Naive thymus-derived CD4-positive, alpha-beta T cell (primary cell): ENCODE measurements at regions of chr21 and their contacts with region 1.

Region 1: GRCh38 chr21:31604591-31605190 is 54.8 kb upstream of the SOD1 start:
- DNase-seq: peak; percentile 32 to 71 (median 64)
- ATAC-seq: peak; percentile 83
- H3K4me3 ChIP-seq: no peak overlapping the region
- H3K4me3 Mint-ChIP-seq: no peak overlapping the region
- H3K27ac ChIP-seq: no peak overlapping the region
- H3K27ac Mint-ChIP-seq: no peak overlapping the region
- H3K4me1 ChIP-seq: no peaks in the 10 kb centered on the region
- H3K4me1 Mint-ChIP-seq: peaks cover 0 to 6% (median 0%) of the 10 kb centered on the region in 7 donors
- H3K27me3 ChIP-seq: no peaks in the 10 kb centered on the region
- H3K27me3 Mint-ChIP-seq: peaks cover 0 to 5% (median 0%) of the 10 kb centered on the region in 5 donors

Region 2: DNA sequence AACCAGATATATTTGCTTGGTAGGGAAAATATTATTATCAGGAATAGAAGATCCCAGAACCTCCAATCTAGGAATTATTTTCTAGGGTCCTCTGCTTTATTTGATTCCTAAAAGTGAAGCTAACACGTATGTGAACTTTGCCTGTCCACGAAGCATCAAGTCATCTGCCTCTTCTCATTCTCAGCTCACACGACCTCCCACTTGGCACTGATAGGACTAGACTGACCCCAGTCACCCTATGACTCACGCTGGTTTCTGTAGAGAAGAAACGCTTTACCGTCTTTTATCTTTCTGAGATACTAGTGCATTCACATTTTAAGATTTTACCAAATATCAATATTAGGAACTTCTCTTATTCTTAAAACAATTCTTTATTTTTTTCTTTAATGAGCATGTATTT is 1041.6 kb before region 1 on chr21:
- CTCF ChIA-PET with region 1: no interaction called
- POLR2A ChIA-PET with region 1: no interaction called
- intact Hi-C with region 1: no loop called
- DNase-seq: no peak
- ATAC-seq: no peak
- H3K4me3 ChIP-seq: no peak overlapping the region
- H3K4me3 Mint-ChIP-seq: no peak overlapping the region
- H3K27ac ChIP-seq: no peak overlapping the region
- H3K27ac Mint-ChIP-seq: no peak overlapping the region
- H3K4me1 ChIP-seq: no peaks in the 10 kb centered on the region
- H3K4me1 Mint-ChIP-seq: no peaks in the 10 kb centered on the region
- H3K27me3 ChIP-seq: no peaks in the 10 kb centered on the region
- H3K27me3 Mint-ChIP-seq: peaks cover 0 to 5% (median 3%) of the 10 kb centered on the region in 5 donors

Region 3: DNA sequence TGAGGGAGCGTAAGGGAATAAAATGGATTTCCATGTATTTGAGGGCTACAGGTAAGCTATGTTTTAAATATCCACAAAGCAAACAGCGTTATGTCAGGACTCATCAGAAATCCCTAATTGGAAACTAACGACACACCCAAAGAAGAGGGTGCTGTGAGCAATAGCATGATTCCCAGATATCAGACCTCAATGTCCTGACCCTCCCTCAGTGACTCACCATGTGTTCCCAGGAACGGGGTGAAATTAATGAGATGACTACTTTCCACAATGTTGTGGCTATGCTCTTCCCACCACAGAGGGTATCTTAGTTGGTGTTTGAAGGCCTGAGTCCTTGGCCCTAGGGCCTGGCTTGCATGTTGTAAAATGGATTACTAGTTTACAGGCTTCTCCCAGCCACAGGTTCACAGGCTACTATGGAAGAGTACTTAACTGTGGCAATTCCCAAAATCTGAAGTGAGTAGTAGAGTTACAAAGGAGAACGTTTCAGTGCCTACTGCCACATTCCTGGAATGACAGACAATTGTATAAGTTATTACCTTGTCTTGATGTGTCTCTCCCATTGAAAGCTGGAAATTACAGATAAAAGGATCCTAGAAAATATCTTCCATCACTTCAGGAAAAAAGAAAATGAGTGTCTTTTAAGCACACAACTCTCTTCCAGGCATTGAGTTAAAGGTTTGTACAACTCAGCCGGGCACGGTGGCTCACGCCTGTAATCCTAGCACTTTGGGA is 721.7 kb before region 1 on chr21:
- CTCF ChIA-PET with region 1: no interaction called
- POLR2A ChIA-PET with region 1: no interaction called
- intact Hi-C with region 1: no loop called
- DNase-seq: no peak
- ATAC-seq: no peak
- H3K4me3 ChIP-seq: no peak overlapping the region
- H3K4me3 Mint-ChIP-seq: no peak overlapping the region
- H3K27ac ChIP-seq: no peak overlapping the region
- H3K27ac Mint-ChIP-seq: no peak overlapping the region
- H3K4me1 ChIP-seq: no peaks in the 10 kb centered on the region
- H3K4me1 Mint-ChIP-seq: no peaks in the 10 kb centered on the region
- H3K27me3 ChIP-seq: no peaks in the 10 kb centered on the region
- H3K27me3 Mint-ChIP-seq: peaks cover 0 to 16% (median 6%) of the 10 kb centered on the region in 5 donors

Region 4: DNA sequence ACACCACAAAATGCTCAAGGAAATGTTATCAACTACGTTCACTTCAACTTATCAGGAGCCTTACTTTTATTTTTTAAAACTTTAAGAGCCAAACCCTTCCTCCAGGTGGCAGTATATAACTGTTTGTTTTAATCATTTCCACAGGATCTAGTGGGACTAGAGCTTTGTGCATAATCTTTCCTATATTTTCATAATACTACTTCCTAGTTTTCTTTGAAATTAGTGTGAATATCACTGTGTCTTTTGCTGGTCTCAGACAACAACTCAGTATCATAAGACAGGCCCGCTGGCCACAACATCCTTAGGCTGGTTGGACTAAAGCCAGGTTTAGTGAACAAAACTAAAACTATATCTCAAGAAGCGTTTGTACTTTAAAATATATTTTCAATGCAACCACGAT is 406.1 kb before region 1 on chr21:
- CTCF ChIA-PET with region 1: interaction called, 7 read pairs
- POLR2A ChIA-PET with region 1: no interaction called
- intact Hi-C with region 1: loop called (anchors 1 kb)
- DNase-seq: peak in 5 of 9 donors; percentile 51 to 63 (median 58)
- ATAC-seq: peak; percentile 74
- H3K4me3 ChIP-seq: no peak overlapping the region
- H3K4me3 Mint-ChIP-seq: peak overlapping the region in 3 of 10 donors; percentile 11 to 40 (median 13)
- H3K27ac ChIP-seq: no peak overlapping the region
- H3K27ac Mint-ChIP-seq: no peak overlapping the region
- H3K4me1 ChIP-seq: no peaks in the 10 kb centered on the region
- H3K4me1 Mint-ChIP-seq: peaks cover 14 to 42% (median 36%) of the 10 kb centered on the region in 7 donors
- H3K27me3 ChIP-seq: no peaks in the 10 kb centered on the region
- H3K27me3 Mint-ChIP-seq: no peaks in the 10 kb centered on the region

Region 5: DNA sequence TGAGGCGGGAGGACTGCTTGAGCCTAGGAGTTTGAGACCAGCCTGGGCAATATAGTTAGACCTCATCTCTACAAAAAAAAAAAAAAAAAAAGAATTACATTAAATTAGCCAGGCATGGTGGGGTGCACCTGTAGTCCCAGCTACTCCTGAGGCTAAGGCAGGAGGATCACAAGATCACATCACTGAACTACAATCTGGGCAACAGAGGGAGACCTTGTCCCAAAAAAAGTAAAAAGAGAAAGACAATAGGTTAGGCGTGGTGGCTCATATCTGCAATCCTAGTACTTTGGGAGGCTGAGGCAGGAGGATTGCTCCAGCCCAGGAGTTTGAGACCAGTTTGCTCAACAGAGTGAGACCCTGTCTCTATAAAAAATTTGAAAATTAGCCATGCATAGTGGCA is 390.9 kb before region 1 on chr21:
- CTCF ChIA-PET with region 1: no interaction called
- POLR2A ChIA-PET with region 1: no interaction called
- intact Hi-C with region 1: loop called in 1 of 2 experiments (anchors 1 kb)
- DNase-seq: peak in 6 of 9 donors; percentile 12 to 48 (median 26)
- ATAC-seq: no peak
- H3K4me3 ChIP-seq: no peak overlapping the region
- H3K4me3 Mint-ChIP-seq: no peak overlapping the region
- H3K27ac ChIP-seq: no peak overlapping the region
- H3K27ac Mint-ChIP-seq: no peak overlapping the region
- H3K4me1 ChIP-seq: no peaks in the 10 kb centered on the region
- H3K4me1 Mint-ChIP-seq: peaks cover 0 to 9% (median 0%) of the 10 kb centered on the region in 7 donors
- H3K27me3 ChIP-seq: no peaks in the 10 kb centered on the region
- H3K27me3 Mint-ChIP-seq: no peaks in the 10 kb centered on the region

Region 6: DNA sequence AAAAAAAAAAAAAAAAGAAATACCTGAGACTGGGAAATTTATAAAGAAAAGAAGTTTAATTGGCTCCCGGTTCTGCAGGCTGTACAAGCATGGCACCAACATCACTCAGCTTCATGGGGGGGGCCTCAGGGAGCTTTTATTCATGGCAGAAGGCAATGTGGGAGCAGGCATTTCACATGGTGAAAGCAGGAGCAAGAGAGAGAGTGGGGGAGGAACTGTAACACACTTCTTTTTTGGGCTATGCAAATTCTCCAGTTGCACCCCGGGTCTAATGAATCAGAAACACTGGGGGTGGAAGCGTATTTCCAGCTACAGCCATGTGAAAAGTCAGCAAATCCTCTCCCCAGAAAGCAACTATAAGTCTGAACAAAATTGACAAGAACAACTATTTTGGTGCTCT is 43.0 kb after region 1 on chr21:
- CTCF ChIA-PET with region 1: no interaction called
- POLR2A ChIA-PET with region 1: no interaction called
- intact Hi-C with region 1: no loop called
- DNase-seq: no peak
- ATAC-seq: no peak
- H3K4me3 ChIP-seq: no peak overlapping the region
- H3K4me3 Mint-ChIP-seq: no peak overlapping the region
- H3K27ac ChIP-seq: no peak overlapping the region
- H3K27ac Mint-ChIP-seq: no peak overlapping the region
- H3K4me1 ChIP-seq: no peaks in the 10 kb centered on the region
- H3K4me1 Mint-ChIP-seq: no peaks in the 10 kb centered on the region
- H3K27me3 ChIP-seq: no peaks in the 10 kb centered on the region
- H3K27me3 Mint-ChIP-seq: peaks cover 0 to 3% (median 0%) of the 10 kb centered on the region in 5 donors

Region 7: DNA sequence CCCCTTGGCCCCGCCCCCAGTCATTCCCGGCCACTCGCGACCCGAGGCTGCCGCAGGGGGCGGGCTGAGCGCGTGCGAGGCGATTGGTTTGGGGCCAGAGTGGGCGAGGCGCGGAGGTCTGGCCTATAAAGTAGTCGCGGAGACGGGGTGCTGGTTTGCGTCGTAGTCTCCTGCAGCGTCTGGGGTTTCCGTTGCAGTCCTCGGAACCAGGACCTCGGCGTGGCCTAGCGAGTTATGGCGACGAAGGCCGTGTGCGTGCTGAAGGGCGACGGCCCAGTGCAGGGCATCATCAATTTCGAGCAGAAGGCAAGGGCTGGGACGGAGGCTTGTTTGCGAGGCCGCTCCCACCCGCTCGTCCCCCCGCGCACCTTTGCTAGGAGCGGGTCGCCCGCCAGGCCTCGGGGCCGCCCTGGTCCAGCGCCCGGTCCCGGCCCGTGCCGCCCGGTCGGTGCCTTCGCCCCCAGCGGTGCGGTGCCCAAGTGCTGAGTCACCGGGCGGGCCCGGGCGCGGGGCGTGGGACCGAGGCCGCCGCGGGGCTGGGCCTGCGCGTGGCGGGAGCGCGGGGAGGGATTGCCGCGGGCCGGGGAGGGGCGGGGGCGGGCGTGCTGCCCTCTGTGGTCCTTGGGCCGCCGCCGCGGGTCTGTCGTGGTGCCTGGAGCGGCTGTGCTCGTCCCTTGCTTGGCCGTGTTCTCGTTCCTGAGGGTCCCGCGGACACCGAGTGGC is 55.0 kb after region 1 on chr21 and contains the start of gene SOD1:
- CTCF ChIA-PET with region 1: no interaction called
- POLR2A ChIA-PET with region 1: no interaction called
- intact Hi-C with region 1: loop called in 1 of 2 experiments (anchors 2 kb)
- DNase-seq: peak in 8 of 9 donors; percentile 20 to 98 (median 97)
- ATAC-seq: peak; percentile 97
- H3K4me3 ChIP-seq: peak within 1 kb of the TSS; percentile 79
- H3K4me3 Mint-ChIP-seq: peak within 1 kb of the TSS; percentile 95 to 100 (median 100)
- H3K27ac ChIP-seq: peak within 1 kb of the TSS; percentile 88
- H3K27ac Mint-ChIP-seq: peak within 1 kb of the TSS; percentile 97 to 100 (median 98)
- H3K4me1 ChIP-seq: peaks cover 15 to 50% of the 10 kb centered on the region in 2 donors
- H3K4me1 Mint-ChIP-seq: peaks cover 40 to 80% (median 68%) of the 10 kb centered on the region in 7 donors
- H3K27me3 ChIP-seq: no peaks in the 10 kb centered on the region
- H3K27me3 Mint-ChIP-seq: no peaks in the 10 kb centered on the region
- total RNA-seq, gene SOD1: 110 to 218 (median 182) TPM